ENCODE measurements at regions of chr12 and their contacts with region 1.

Region 1: DNA sequence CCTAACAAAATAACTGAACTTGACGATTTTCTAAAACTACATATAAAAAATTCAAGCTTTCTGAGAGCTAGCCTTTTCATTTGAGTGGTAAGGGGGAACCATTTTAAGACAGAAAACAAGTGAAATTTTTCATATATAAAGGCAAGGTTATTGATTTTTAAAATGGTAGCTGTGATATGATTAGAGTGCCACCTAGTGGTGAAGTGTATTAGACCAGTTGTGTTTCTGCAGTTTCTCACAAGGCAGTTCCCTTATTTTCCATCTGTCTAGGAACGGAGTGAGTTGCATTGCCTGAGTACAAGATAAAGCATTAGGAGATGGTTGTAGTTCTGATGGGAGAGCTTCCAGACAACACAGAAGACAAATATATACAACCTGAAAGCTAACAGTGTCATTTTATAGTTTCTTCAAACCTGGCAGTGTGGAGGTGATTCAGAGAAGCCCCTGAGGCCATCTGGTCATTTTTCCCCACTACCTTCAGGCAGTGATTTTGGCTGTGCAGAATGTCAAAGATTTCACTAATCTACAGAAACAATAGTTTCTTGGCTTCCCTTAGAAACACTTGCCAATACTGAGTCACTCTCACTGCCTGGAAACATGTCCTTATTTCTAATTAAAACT is 180.8 kb downstream of the C12orf50 start:
- DNase-seq: peak; percentile 58
- H3K4me3 ChIP-seq: no peak overlapping the region
- H3K27ac ChIP-seq: no peak overlapping the region
- H3K27me3 ChIP-seq: no peaks in the 10 kb centered on the region
- CTCF ChIP-seq: peak; percentile 79

Region 2: GRCh38 chr12:87836190-87836589 is 12.2 kb before region 1 on chr12:
- CTCF ChIA-PET with region 1: interaction called, 15 read pairs
- POLR2A ChIA-PET with region 1: no interaction called
- DNase-seq: no peak
- H3K4me3 ChIP-seq: no peak overlapping the region
- H3K27ac ChIP-seq: no peak overlapping the region
- H3K27me3 ChIP-seq: no peaks in the 10 kb centered on the region
- CTCF ChIP-seq: no peak

Region 3: GRCh38 chr12:87861791-87862190 is 13.4 kb after region 1 on chr12:
- CTCF ChIA-PET with region 1: interaction called, 17 read pairs
- POLR2A ChIA-PET with region 1: no interaction called
- DNase-seq: no peak
- H3K4me3 ChIP-seq: no peak overlapping the region
- H3K27ac ChIP-seq: no peak overlapping the region
- H3K27me3 ChIP-seq: no peaks in the 10 kb centered on the region
- CTCF ChIP-seq: no peak

Region 4: DNA sequence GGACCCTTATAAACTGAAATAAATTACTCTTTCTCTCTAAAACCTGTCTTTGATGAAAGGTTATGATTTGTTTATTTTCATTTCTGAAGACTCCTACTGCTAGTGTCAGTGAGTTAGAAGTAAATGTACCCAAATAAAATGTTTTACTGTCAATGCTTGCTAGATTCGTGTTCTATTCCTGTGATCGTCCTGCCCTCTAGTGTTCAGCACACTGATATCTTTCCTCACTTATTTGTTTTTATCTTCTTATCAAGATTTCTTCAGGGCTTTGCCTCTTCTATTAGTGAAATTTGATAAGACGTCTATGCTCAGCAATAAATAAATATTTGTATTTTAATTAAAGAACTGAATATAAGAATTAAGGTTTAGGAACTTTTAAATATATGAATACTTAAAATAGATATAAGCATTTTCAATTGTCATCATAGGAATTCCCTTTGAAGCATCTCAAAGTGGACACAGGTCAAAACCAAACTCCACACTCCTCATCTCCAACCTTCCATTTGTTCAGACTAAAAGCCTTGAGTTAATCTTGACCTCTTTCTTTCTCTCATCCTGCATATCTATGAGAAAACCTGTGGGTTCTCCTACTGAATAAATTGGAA is 105.0 kb after region 1 on chr12:
- CTCF ChIA-PET with region 1: interaction called, 17 read pairs
- POLR2A ChIA-PET with region 1: no interaction called
- DNase-seq: peak; percentile 36
- H3K4me3 ChIP-seq: no peak overlapping the region
- H3K27ac ChIP-seq: no peak overlapping the region
- H3K27me3 ChIP-seq: no peaks in the 10 kb centered on the region
- CTCF ChIP-seq: peak; percentile 74

Region 5: DNA sequence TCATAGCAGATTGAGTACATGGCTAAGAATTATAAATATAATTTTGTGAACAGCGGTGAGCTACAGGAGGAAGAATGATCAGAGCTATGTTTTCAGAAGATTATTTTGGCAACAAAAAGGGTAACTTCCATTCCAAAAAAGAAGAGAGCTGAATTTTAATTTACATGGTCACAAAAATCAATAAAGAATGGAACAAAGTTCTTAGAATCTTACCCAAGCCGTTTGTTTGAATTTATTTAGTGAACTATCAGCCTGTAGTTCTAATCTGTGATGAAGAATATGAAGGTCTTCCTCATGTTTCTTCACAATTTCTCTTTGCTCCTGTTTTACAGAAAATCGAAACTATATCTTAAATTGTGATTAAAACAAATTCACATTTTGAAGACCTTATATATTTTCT is 235.3 kb after region 1 on chr12:
- CTCF ChIA-PET with region 1: no interaction called
- POLR2A ChIA-PET with region 1: no interaction called
- DNase-seq: no peak
- H3K4me3 ChIP-seq: no peak overlapping the region
- H3K27ac ChIP-seq: no peak overlapping the region
- H3K27me3 ChIP-seq: no peaks in the 10 kb centered on the region
- CTCF ChIP-seq: no peak

Region 6: GRCh38 chr12:88334271-88334670 is 485.9 kb after region 1 on chr12:
- CTCF ChIA-PET with region 1: no interaction called
- POLR2A ChIA-PET with region 1: no interaction called
- DNase-seq: peak; percentile 7
- H3K4me3 ChIP-seq: no peak overlapping the region
- H3K27ac ChIP-seq: no peak overlapping the region
- H3K27me3 ChIP-seq: no peaks in the 10 kb centered on the region
- CTCF ChIP-seq: no peak